Sciatic nerve (tissue), 2 donors: ENCODE measurements at regions of chr11 and their contacts with region 1.

Region 1: GRCh38 chr11:118450451-118450850 is 14.2 kb downstream of the KMT2A start:
- DNase-seq: no peak
- ATAC-seq: no peak

Region 2: GRCh38 chr11:118359295-118359958 is 91.0 kb before region 1 on chr11 and contains the start of gene UBE4A:
- intact Hi-C with region 1: no loop called
- DNase-seq: peak; percentile 99
- ATAC-seq: peak; percentile 99
- total RNA-seq, gene UBE4A: 40.8 TPM

Region 3: DNA sequence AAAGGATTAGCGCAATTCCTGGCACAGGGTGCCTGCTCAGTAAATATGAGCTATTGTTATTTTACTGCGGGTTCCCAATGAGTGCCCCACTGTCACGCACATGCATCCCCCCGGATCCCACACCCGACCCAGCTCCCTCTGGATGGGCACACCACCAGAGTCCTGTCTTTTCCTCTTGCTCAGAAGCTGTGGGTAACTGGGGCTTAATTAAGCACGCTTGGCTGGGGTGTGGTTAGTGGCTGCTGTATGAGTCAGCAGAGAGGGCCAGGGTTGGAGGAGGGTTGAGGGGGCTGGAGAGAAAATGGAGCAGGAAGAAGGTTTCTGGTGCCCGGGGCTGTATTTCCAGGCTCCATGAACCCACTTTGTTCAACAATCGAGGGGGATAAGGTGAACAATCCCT is 1308.9 kb after region 1 on chr11:
- intact Hi-C with region 1: loop called (anchors 10 kb)
- DNase-seq: no peak
- ATAC-seq: no peak